Activated CD4-positive, alpha-beta memory T cell treated with anti-CD3 and anti-CD28 coated beads for 36 hours (primary cell): ENCODE measurements at regions of chr7 and their contacts with region 1.

Region 1: DNA sequence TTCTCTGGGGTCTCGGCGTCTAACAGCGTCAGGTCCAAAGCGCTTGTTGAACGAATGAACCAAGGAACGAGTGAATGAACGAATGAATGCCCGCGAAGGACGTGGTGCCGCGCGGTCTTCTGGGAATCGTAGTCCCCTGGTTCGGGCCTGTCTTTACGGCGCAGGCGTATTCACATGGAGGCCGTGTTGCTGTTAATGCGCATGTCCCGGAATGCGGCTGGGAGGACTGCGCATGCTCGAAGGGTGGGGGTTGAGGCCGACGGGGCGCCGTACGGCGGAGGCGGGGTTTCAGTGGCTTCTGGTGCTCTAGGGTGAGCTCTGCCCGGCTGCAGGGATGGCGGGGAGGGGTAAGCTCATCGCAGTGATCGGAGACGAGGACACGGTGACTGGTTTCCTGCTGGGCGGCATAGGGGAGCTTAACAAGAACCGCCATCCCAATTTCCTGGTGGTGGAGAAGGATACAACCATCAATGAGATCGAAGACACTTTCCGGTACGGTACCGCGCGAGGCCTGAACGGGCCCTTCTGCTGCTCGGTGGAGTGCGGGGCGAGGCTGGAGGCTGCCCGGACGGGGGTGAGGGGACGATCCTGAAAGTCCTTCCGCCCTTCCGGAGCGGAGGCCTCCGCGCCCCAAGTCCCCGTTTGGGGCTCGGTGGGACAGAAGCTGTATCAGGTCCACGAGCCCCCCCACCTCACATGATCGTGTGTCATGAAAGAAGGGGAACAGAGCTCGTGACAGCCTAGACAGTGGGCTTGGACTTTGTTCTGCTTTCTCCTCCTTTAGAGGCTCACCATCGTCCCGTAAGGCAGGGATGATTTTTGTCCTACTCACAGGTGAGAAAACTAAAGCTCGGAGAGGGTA is at the start of gene ATP6V1F:
- DNase-seq: peak; percentile 100
- H3K4me3 Mint-ChIP-seq: peak within 1 kb of the TSS; percentile 98
- H3K27ac Mint-ChIP-seq: peak within 1 kb of the TSS; percentile 84
- H3K4me1 Mint-ChIP-seq: peaks cover 14% of the 10 kb centered on the region
- H3K27me3 Mint-ChIP-seq: peaks cover 1% of the 10 kb centered on the region
- total RNA-seq, gene ATP6V1F: 113 to 117 TPM

Region 2: GRCh38 chr7:128739048-128739962 is 123.5 kb before region 1 on chr7 and contains the start of gene CALU:
- CTCF ChIA-PET with region 1: interaction called, 4 read pairs
- POLR2A ChIA-PET with region 1: interaction called, 4 read pairs
- intact Hi-C with region 1: loop called (anchors 2 kb)
- DNase-seq: peak; percentile 97
- H3K4me3 Mint-ChIP-seq: peak within 1 kb of the TSS; percentile 97
- H3K27ac Mint-ChIP-seq: peak within 1 kb of the TSS; percentile 90
- H3K4me1 Mint-ChIP-seq: peaks cover 43% of the 10 kb centered on the region
- H3K27me3 Mint-ChIP-seq: no peaks in the 10 kb centered on the region
- total RNA-seq, gene CALU: 43.2 to 44.2 TPM

Region 3: DNA sequence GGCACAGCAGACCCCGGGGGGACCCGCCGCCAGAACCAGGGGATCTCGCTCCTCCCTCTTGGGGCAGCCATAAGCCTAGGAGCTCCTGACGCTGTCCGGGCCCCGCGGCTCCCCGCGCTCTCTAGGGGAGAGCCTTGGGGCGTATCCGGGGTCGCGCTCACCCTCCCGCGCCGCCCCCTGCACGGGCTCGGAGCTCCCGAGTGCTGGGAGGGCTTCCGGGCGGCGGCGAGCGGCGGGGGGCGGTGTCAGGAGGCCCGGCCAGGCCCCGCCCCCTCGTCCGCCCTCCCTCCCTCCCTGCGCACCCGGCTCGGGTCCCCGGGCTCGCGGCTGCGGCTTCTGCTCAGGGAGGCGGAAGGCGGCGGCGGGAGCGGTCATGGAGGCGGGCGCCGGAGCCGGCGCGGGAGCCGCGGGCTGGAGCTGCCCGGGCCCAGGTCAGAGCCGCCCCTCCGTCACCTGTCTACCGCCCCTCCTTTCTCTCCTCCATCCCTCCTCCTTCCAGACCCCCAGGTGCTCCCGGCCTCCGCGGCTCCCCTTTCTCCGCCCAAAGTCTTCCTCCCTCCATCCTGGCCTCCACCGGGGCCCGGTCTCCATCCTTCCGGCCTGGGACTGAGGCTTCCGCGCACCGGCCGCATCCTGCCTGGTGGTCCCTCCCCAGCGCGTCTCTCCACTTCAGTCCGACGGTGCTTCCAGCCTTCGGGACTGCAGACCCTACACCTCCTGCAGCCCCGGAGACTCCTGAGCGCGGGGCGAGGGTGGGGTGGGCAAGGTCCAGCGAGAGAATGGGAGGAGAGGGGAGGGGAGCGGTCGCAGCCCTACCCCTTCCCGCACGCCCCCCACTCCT is 71.5 kb before region 1 on chr7:
- CTCF ChIA-PET with region 1: interaction called, 3 read pairs
- POLR2A ChIA-PET with region 1: no interaction called
- intact Hi-C with region 1: loop called (anchors 2 kb)
- DNase-seq: peak; percentile 83
- H3K4me3 Mint-ChIP-seq: peak overlapping the region; percentile 77
- H3K27ac Mint-ChIP-seq: no peak overlapping the region
- H3K4me1 Mint-ChIP-seq: no peaks in the 10 kb centered on the region
- H3K27me3 Mint-ChIP-seq: no peaks in the 10 kb centered on the region

Region 4: DNA sequence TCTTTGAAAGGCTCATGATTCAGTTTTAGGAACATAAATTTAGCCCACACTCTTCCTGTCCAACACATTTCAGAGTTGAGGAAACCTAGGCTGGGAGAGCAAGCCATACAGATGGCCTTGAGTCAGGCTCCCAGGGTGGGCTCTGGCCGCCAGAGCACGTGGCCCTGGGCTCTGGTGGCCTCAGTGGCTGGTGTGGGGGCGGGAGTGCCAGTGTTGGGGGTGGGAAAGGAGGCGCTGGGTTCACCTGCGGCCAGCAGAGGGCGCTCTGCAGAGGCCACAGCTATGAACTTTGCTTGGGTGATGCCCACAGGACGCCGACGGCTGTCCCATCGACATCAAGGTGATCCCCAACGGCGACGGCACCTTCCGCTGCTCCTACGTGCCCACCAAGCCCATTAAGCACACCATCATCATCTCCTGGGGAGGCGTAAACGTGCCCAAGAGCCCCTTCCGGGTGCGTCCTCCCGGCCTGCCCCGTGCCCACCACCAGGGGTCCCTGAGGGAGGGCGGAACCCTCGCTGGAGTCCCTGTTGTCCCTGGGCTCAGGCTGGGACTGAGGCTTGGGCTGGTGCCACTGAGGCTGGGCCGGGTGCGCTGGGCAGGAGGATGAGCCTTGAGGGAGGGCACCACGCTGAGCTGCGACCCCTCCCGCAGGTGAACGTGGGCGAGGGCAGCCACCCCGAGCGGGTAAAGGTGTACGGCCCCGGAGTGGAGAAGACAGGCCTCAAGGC is 20.7 kb before region 1 on chr7:
- CTCF ChIA-PET with region 1: interaction called, 25 read pairs
- POLR2A ChIA-PET with region 1: no interaction called
- intact Hi-C with region 1: no loop called
- DNase-seq: peak; percentile 75
- H3K4me3 Mint-ChIP-seq: no peak overlapping the region
- H3K27ac Mint-ChIP-seq: no peak overlapping the region
- H3K4me1 Mint-ChIP-seq: peaks cover 5% of the 10 kb centered on the region
- H3K27me3 Mint-ChIP-seq: no peaks in the 10 kb centered on the region

Region 5: DNA sequence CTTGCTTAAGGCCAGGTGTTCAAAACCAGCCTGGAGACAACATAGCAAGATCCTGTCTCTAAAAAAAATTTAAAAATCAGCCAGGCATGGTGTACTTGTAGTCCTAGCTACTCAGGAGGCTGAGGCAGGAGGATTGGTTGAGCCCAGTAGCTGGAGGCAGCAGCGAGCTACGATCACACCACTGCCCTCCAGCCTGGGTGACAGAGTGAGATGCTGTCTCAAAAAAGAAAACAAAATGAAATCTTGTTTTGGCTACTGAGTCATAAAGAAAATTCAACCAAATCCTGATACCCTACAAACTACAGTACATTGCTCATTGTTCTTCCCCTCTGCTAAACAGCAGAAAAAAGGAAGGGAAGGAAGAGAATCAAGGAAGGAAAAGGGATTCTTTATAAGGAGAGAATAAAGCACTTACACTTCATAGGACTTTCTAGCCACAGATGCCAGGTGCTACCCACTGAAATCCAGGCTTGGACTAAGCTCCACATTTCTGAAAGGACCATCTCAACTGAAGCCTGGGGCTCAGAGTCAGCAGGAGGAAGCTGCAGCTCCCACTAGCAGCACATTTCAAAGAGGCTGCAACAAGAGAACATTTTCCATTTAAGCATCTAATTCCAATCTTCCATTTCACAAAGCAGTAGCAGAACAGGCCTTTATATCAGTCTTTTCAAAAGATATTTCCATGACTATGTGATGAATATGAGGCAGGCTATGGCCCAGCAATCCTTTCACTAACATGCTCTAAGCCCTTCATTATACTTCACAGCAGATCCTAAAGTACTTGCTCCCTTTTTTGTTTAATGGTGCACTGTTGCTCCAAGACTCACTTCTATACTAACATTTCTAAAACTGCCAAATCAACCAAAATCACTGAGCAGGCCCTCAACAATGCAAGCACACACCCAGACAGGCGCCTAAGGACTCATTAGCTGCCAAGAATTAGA is 178.6 kb after region 1 on chr7:
- CTCF ChIA-PET with region 1: no interaction called
- POLR2A ChIA-PET with region 1: no interaction called
- intact Hi-C with region 1: no loop called
- DNase-seq: peak; percentile 45
- H3K4me3 Mint-ChIP-seq: no peak overlapping the region
- H3K27ac Mint-ChIP-seq: no peak overlapping the region
- H3K4me1 Mint-ChIP-seq: peaks cover 64% of the 10 kb centered on the region
- H3K27me3 Mint-ChIP-seq: no peaks in the 10 kb centered on the region

Region 6: DNA sequence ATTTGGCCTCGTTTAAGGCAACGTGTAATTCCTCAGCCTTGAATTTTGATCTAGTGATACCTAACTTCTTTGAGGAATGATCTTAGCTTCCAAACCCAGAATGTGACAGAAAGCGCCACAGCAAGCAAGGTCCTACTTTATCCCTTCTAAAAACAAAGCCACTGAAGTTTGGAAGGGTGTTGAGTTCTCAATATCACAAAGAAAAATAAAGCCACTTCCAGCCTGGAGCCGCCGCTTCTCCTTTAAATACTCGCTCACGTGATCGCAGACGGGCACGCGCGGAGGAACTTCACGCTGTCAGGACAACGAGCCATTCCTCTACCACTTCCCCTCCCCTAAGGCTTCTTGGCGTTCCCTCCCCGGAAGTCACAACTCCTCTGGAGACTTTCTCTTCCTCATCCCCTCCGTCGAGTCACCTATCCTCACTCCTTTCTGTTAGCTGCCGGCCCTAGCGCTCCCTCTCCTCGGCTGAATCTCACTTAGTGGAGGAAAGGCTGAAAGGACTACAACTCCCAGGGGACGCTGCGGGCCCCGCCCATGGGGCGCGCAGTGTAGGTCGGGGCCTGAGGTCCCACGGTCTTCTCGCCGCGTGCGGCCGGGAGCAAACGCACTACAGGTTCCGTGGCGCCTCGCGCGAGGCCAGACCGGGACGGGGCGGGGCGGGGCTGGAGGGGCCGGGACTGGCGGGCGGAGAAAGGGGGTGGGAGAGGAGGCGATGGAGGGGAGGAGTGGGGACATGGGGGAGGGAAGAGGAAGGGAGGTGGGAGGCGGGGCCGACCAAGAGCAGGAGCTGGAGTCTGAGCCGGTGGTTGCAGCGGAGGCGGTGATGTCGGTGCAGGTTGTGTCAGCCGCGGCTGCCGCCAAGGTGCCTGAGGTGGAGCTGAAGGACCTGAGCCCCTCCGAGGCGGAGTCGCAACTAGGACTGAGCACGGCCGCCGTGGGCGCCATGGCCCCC is 361.7 kb after region 1 on chr7 and contains the start of gene AHCYL2:
- CTCF ChIA-PET with region 1: interaction called, 4 read pairs
- POLR2A ChIA-PET with region 1: interaction called, 3 read pairs
- intact Hi-C with region 1: loop called (anchors 1 kb)
- DNase-seq: peak; percentile 99
- H3K4me3 Mint-ChIP-seq: peak within 1 kb of the TSS; percentile 87
- H3K27ac Mint-ChIP-seq: peak within 1 kb of the TSS; percentile 91
- H3K4me1 Mint-ChIP-seq: peaks cover 27% of the 10 kb centered on the region
- H3K27me3 Mint-ChIP-seq: no peaks in the 10 kb centered on the region
- total RNA-seq, gene AHCYL2: 16.4 to 17.1 TPM